PC-3 (cell line): ENCODE measurements at regions of chr3 and their contacts with region 1.

Region 1: GRCh38 chr3:194682694-194683310 is 2.9 kb upstream of the FAM43A start:
- DNase-seq: peak; percentile 97
- ATAC-seq: peak; percentile 54
- H3K4me3 ChIP-seq: no peak overlapping the region; the same call in 1 of the 2 replicates
- H3K27ac ChIP-seq: peak overlapping the region; percentile 60
- H3K4me1 ChIP-seq: peaks cover 20% of the 10 kb centered on the region
- H3K27me3 ChIP-seq: no peaks in the 10 kb centered on the region
- CTCF ChIP-seq: peak; percentile 98

Region 2: DNA sequence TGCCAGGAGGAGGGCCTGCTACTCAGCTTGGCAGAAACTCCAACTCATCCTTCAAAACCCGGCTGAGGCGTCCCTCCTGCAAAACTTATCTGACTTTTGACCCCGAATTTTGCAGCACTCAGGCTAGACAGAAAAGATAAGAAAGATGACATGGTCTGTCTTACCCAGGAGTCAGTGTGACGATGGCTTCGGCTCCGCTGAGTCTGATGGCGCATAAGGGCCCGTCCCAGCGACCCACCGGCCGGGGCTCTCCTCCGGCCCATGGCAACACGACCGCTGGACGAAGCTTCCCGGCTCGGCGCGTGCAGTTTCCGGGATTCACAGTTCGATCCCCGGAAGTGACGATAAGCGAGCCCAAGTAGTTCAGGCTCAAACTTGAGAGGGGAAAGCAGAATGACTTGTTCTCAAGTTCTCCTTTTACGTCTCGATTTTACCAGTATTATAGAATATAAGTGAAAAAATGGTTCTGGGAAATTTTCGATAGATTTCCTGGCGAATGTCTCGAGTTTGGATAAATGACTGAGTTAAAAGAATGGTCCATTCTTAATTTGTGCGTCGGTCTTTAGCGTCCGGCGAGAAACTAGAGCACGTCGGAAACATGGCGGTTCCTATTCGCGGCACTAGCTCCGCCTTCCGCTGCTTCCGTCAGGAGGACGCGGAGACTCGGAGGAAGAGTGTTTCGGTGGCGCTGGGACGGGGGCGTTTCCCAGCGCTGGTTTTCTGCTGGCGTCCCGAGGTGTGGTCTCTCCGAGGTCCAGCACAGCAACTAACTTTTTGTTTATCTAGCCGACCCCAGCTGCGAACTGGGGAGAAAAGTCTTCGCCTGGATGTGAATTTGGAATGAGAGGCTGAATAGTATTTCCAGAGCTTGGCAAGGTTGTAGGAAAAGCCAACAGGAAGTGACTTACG is 10.6 kb before region 1 on chr3 and contains the start of gene LSG1:
- CTCF ChIA-PET with region 1: interaction called, 13 read pairs
- POLR2A ChIA-PET with region 1: interaction called, 3 read pairs
- intact Hi-C with region 1: no loop called
- DNase-seq: peak; percentile 97
- ATAC-seq: peak; percentile 96
- H3K4me3 ChIP-seq: peak within 1 kb of the TSS; percentile 87
- H3K27ac ChIP-seq: peak within 1 kb of the TSS; percentile 71
- H3K4me1 ChIP-seq: peaks cover 14% of the 10 kb centered on the region
- H3K27me3 ChIP-seq: no peaks in the 10 kb centered on the region
- CTCF ChIP-seq: no peak
- total RNA-seq, gene LSG1: 83.8 and 102 TPM in 2 replicates

Region 3: DNA sequence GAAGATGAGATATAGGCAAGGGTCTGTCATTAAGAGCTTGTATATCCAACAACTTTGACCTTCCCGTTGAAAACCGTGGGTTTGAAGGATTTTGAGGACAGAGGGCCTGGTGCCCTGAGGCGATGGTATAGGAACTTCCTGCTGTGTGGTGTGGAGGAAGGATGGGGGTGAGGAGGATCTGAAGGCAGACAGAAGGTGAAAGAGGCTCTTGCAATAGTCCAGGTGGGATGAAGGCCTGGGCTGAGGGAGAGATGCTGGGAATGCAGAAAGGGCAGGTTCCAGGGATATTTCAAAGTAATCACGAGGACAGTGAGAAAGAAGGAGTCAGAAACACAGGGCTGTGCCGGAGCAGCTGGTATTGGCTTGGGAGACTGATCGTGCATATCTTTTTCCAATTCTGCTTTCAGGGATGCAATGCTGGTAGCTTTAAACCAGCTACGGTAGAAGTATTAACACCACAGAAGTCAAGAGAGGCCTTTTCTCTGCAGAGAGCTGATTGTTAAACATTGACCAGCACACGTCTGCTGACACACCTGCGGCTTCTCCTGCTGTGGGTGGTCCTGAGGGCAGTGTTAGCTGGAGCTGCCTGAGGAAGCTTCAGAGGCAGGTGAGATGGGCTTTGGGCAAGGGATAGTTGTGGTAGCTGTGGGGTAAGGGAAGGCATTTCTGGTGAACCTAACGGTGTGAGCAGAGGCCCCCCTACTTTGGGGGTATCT is 23.8 kb after region 1 on chr3:
- CTCF ChIA-PET with region 1: no interaction called
- POLR2A ChIA-PET with region 1: no interaction called
- intact Hi-C with region 1: no loop called
- DNase-seq: no peak
- ATAC-seq: no peak
- H3K4me3 ChIP-seq: no peak overlapping the region
- H3K27ac ChIP-seq: no peak overlapping the region
- H3K4me1 ChIP-seq: peaks cover 7% of the 10 kb centered on the region
- H3K27me3 ChIP-seq: no peaks in the 10 kb centered on the region
- CTCF ChIP-seq: no peak

Region 4: GRCh38 chr3:194769020-194769643 is 86.3 kb after region 1 on chr3:
- CTCF ChIA-PET with region 1: no interaction called
- POLR2A ChIA-PET with region 1: no interaction called
- intact Hi-C with region 1: loop called (anchors 1 kb)
- DNase-seq: peak; percentile 97
- ATAC-seq: peak; percentile 87
- H3K4me3 ChIP-seq: peak overlapping the region; percentile 65
- H3K27ac ChIP-seq: no peak overlapping the region
- H3K4me1 ChIP-seq: peaks cover 37% of the 10 kb centered on the region
- H3K27me3 ChIP-seq: no peaks in the 10 kb centered on the region
- CTCF ChIP-seq: no peak

Region 5: DNA sequence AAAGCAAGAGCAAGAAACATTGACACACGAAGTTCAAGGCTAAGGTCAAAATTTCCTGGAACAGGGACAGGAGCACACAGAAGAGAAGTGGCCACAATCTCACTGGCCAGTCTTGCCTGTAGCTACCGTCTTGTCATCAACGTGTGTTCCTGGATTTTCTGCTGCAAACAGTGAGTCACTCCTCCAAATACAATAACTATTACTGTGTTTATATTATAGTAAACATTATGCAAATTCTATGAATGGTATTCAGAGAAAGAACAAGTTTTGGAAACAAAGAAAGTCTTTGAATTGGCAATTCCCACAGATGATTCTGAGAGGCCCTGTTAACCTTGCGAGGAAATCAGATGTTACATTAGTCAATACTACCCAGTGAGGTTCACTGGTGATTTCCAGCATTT is 223.4 kb after region 1 on chr3:
- CTCF ChIA-PET with region 1: no interaction called
- POLR2A ChIA-PET with region 1: no interaction called
- intact Hi-C with region 1: loop called (anchors 1 kb)
- DNase-seq: peak; percentile 82
- ATAC-seq: peak; percentile 98
- H3K4me3 ChIP-seq: no peak overlapping the region
- H3K27ac ChIP-seq: peak overlapping the region; percentile 75
- H3K4me1 ChIP-seq: peaks cover 22% of the 10 kb centered on the region
- H3K27me3 ChIP-seq: no peaks in the 10 kb centered on the region
- CTCF ChIP-seq: no peak

Region 6: DNA sequence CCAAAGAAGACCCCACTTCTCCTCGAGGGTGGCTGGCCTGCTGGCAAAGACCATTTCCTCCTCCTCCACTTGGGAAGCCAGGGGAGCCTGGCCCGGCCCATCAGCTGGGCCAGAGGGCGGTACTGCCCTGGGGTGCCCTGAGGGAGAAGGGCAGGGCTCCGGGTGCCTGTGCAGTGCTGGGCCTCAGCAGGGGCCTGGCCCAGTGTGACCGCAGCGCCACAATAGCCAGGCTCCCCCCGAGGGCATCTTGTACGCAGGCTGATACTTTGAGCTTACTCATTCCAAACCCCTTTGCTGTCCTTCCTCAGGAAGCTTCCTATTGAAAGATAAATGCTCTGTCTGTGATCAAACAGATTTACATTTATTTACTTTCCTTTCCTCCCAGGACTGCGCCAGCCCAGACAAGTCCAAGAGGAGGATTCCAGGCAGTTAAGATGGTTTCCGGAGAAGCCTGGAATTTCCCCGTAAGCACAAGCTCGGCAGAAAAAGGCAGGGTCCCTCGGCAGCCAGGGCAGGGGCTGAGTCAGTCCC is 348.1 kb after region 1 on chr3:
- CTCF ChIA-PET with region 1: interaction called, 8 read pairs
- POLR2A ChIA-PET with region 1: no interaction called
- intact Hi-C with region 1: loop called (anchors 2 kb)
- DNase-seq: peak; percentile 94
- ATAC-seq: peak; percentile 84
- H3K4me3 ChIP-seq: peak overlapping the region; percentile 25
- H3K27ac ChIP-seq: peak overlapping the region; percentile 89
- H3K4me1 ChIP-seq: peaks cover 44% of the 10 kb centered on the region
- H3K27me3 ChIP-seq: no peaks in the 10 kb centered on the region
- CTCF ChIP-seq: no peak

Region 7: GRCh38 chr3:195296662-195297061 is 613.9 kb after region 1 on chr3:
- CTCF ChIA-PET with region 1: no interaction called
- POLR2A ChIA-PET with region 1: no interaction called
- intact Hi-C with region 1: no loop called
- DNase-seq: no peak
- ATAC-seq: no peak
- H3K4me3 ChIP-seq: no peak overlapping the region
- H3K27ac ChIP-seq: no peak overlapping the region
- H3K4me1 ChIP-seq: no peaks in the 10 kb centered on the region
- H3K27me3 ChIP-seq: no peaks in the 10 kb centered on the region
- CTCF ChIP-seq: no peak

Region 8: DNA sequence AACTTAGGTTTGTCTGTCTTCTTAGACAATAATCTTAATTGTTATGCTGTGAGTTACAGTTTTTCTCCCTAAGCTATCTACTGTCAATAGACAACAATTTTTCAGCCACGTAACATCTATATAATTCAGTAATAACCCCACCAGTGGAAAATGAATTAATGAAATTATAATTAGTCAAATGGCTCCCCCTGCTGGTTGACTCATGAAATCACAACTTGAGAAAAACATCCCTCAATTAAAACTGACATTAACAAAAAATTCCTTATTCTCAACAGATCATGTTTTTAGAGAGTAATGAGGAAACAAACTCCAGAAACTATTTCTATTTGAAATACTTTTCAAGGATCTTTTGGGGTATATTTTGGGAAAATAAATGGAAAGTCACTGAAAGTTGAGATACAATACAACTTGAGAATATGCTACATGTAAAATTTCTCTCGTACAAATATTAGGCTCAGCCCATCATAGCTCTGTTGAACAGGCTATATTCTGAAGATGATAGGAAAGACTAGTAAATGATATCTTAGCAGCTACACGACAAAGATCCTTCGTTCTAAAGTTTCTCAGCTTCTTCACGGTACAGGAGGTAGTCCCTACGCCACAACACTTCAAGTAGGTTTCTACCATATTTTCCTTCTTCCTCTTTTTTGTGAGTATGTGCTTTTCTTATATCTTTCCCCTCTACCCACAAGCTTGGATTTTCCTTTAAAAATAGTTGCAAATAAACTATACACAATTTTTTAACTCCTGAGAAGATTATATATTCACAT is 839.6 kb after region 1 on chr3:
- CTCF ChIA-PET with region 1: no interaction called
- POLR2A ChIA-PET with region 1: no interaction called
- intact Hi-C with region 1: loop called (anchors 10 kb)
- DNase-seq: peak; percentile 57
- ATAC-seq: no peak
- H3K4me3 ChIP-seq: no peak overlapping the region
- H3K27ac ChIP-seq: no peak overlapping the region
- H3K4me1 ChIP-seq: peaks cover 23% of the 10 kb centered on the region
- H3K27me3 ChIP-seq: no peaks in the 10 kb centered on the region
- CTCF ChIP-seq: peak; percentile 91